HepG2 (cell line): ENCODE measurements at regions of chr16 and their contacts with region 1.

Region 1: DNA sequence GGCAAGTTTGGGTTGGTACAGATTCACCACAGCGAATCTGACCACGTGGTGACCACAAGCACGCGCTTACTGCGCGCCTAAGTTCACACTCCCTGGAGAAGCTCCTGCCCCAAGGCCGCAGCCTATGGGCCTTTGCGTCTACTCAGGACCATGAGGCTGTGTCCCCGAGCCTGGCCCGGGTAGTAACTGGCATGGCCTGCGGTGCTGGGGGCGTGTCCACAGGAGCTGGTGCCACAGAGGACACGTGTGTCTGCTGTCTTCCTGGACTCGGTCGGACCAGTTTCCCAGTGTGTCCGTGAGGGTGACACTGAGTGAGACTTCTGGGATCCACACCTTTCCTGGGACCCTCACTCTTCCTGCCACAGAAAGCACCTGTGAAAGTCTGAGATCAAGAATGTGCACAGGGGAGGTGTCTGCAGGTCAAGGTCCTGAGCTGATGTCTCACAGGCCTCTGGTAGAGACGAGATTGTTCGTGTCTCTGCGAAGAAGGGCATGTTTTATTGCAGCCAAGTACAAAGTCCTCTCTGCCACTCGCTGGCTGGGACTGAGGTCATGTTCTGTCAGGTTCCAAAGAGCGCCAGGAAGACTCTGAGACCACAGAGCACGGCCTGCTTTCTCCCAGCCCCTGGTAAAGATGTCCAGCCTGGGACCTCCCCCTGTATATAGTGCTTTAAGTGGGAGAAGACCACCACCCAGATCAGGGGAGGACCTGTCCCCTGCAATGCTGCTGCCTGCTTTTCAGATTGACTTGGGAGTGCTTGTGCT is 25.2 kb upstream of the CAPN15 start:
- DNase-seq: peak; percentile 86
- ATAC-seq: peak; percentile 82
- H3K4me3 ChIP-seq: peak overlapping the region; percentile 24 to 65 (median 44)
- H3K27ac ChIP-seq: peak overlapping the region; percentile 93
- H3K4me1 ChIP-seq: peaks cover 59% of the 10 kb centered on the region
- H3K27me3 ChIP-seq: no peaks in the 10 kb centered on the region
- CTCF ChIP-seq: 0 out of 2 replicates have a peak, but pooled peaks have one; percentile 23
- EP300 ChIP-seq: peak; percentile 17 to 56; a peak in 2 of 4 replicates
- POLR2A ChIP-seq: peak; percentile 41 to 67; a peak in 3 of 4 replicates
- RAD21 ChIP-seq: no peak

Region 2: DNA sequence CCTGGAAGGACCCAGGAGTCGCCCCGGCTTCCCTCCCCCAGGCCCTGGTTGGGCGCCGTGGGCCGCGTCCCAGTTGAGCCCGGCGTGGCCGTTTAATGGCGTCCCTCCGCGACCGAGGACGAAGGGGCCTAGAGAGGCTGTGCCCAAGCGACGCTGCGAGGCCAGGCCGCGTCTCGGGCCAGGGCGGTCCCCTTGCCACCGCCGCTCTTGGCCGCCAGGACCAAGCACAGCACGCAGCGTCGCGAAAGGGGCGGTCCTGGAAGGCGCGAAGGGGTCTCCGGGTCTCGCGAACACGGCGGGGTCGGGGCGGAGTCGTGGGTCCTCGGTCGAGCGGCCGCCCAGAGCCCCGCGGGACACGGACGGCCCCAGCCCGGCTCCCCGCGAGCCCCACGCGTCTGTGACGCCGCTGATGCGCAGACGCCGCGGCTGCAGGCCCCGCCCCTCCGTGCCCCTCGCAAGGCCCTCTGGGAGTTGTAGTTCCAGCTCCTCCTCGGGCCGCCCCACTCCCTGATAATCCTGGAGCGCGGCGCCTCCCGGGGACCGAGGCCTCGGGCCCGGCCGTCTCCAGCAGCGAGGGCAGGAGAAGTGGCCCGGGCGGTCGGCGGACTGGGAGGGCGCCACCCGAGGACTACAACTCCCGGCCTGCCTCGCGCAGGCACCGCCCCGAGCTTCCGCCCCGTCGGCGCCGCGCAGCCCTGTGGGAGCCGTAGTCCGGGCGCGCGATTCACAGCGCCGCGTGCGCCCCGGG is 24.8 kb after region 1 on chr16 and contains the start of gene CAPN15:
- CTCF ChIA-PET with region 1: no interaction called
- POLR2A ChIA-PET with region 1: interaction called, 35 read pairs
- in situ Hi-C with region 1: no loop called
- intact Hi-C with region 1: no loop called
- DNase-seq: peak; percentile 76
- ATAC-seq: peak; percentile 76
- H3K4me3 ChIP-seq: peak within 1 kb of the TSS; percentile 92 to 96 (median 96)
- H3K27ac ChIP-seq: peak within 1 kb of the TSS; percentile 72
- H3K4me1 ChIP-seq: peaks cover 51% of the 10 kb centered on the region
- H3K27me3 ChIP-seq: no peaks in the 10 kb centered on the region; a peak in 1 of 5 replicates
- CTCF ChIP-seq: 0 out of 2 replicates have a peak, but pooled peaks have one; percentile 12
- EP300 ChIP-seq: no peak
- POLR2A ChIP-seq: peak; percentile 46 to 82
- RAD21 ChIP-seq: peak; percentile 53
- total RNA-seq, gene CAPN15: 15.0 and 24.5 TPM in 2 replicates